CD14-positive monocyte (primary cell): ENCODE measurements at regions of chr2 and their contacts with region 1.

Region 1: DNA sequence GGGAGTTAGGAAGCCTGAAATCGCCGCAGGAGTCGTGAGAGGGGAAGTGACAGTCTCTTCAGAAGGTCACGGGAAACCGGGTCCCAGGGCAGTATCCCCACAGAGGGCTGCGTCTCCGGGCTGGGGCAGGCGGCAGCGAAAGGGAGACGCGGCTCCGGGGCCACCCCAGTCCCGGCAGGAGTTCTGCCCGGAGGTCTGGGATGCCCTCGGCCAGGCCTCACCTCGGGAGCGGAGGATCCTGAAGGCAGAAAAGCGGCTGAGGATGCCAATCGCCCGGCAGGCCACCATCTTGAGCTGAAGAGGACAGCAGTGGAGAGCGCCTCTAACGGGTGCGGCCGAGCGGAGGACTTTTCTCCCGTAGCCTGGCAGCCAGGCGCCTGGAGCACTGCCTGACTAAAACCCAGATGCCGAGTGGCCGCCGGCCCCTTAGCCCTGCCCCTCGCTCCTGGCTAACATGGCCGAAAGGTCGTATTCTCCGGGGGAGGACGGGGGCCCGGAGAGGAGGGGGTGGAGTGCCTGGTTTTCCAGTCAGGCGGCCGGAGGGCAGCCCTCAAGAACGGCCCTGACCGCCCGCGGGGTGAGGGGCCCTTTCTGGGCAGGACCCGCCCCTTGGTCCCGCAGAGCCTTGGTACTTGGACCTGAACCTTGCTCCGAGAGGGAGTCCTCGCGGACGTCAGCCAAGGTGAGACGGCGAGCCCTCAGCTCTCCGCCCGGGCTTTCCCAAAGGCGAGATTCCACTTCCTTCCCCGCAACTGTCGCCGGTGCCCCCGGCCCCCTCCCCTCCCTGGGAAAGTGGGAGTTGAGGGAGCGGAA is at the starts of genes HADHA and HADHB:
- DNase-seq: peak; percentile 80 to 84 (median 83)
- H3K4me3 ChIP-seq: peak within 1 kb of the TSS; percentile 76 to 97 (median 79)
- H3K4me3 Mint-ChIP-seq: peak within 1 kb of the TSS; percentile 98 to 99
- H3K27ac ChIP-seq: peak within 1 kb of the TSS; percentile 97 to 98
- H3K27ac Mint-ChIP-seq: peak within 1 kb of the TSS; percentile 98 to 100 (median 100)
- H3K4me1 ChIP-seq: peaks cover 47 to 63% of the 10 kb centered on the region in 2 donors
- H3K4me1 Mint-ChIP-seq: peaks cover 62% of the 10 kb centered on the region
- H3K27me3 ChIP-seq: no peaks in the 10 kb centered on the region
- H3K27me3 Mint-ChIP-seq: no peaks in the 10 kb centered on the region
- CTCF ChIP-seq: no peak
- polyA plus RNA-seq, gene HADHA: 60.2 to 187 (median 155) TPM
- polyA plus RNA-seq, gene HADHB: 94.3 to 200 (median 186) TPM

Region 2: GRCh38 chr2:25512707-25513106 is 731.8 kb before region 1 on chr2:
- intact Hi-C with region 1: no loop called
- DNase-seq: peak in 2 of 3 donors; percentile 3 to 8
- H3K4me3 ChIP-seq: no peak overlapping the region
- H3K4me3 Mint-ChIP-seq: no peak overlapping the region
- H3K27ac ChIP-seq: no peak overlapping the region
- H3K27ac Mint-ChIP-seq: peak overlapping the region in 1 of 7 donors; percentile 3
- H3K4me1 ChIP-seq: peaks cover 0 to 8% of the 10 kb centered on the region in 2 donors
- H3K4me1 Mint-ChIP-seq: peaks cover 20% of the 10 kb centered on the region
- H3K27me3 ChIP-seq: no peaks in the 10 kb centered on the region
- H3K27me3 Mint-ChIP-seq: peaks cover 0 to 3% (median 0%) of the 10 kb centered on the region in 3 donors
- CTCF ChIP-seq: no peak

Region 3: GRCh38 chr2:26088032-26088643 is 156.4 kb before region 1 on chr2:
- intact Hi-C with region 1: no loop called
- DNase-seq: peak in 2 of 3 donors; percentile 13 to 21
- H3K4me3 ChIP-seq: no peak overlapping the region
- H3K4me3 Mint-ChIP-seq: no peak overlapping the region
- H3K27ac ChIP-seq: no peak overlapping the region
- H3K27ac Mint-ChIP-seq: peak overlapping the region in 1 of 7 donors; percentile 69
- H3K4me1 ChIP-seq: peaks cover 28 to 35% of the 10 kb centered on the region in 2 donors
- H3K4me1 Mint-ChIP-seq: peaks cover 61% of the 10 kb centered on the region
- H3K27me3 ChIP-seq: no peaks in the 10 kb centered on the region
- H3K27me3 Mint-ChIP-seq: peaks cover 0 to 2% (median 0%) of the 10 kb centered on the region in 3 donors
- CTCF ChIP-seq: peak; percentile 86

Region 4: DNA sequence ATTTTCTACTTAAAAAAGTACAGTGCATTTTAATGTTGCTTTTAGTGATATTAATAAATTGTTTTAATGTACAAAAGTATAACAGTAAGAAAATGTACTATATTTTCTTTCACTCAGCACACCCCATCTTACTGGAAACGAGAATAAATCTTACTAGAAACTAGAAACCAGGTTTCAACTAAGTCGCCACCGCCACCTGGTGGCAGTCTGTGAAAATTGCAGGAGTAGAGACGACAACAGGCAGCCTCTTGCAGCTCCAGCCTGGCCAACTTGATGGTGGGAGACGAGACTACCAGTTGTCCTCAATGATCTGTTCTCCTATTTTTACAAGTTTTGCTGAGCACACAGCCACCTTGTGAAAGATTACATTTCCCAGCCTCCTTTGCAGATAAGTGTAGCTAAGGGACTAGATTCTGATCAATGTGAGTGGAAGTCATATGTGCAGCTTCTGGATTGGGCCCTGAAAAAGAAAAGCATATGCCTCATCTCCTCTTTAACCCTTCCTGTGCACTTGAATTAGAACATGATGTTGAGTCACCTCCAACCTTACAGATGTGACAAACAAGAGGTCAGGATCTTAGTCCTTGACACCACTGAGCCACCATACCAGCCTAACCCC is 224.7 kb after region 1 on chr2:
- intact Hi-C with region 1: loop called in 1 of 2 experiments (anchors 10 kb)
- DNase-seq: peak; percentile 60 to 81 (median 67)
- H3K4me3 ChIP-seq: no peak overlapping the region
- H3K4me3 Mint-ChIP-seq: no peak overlapping the region
- H3K27ac ChIP-seq: no peak overlapping the region
- H3K27ac Mint-ChIP-seq: peak overlapping the region in 1 of 7 donors; percentile 18
- H3K4me1 ChIP-seq: no peaks in the 10 kb centered on the region
- H3K4me1 Mint-ChIP-seq: no peaks in the 10 kb centered on the region
- H3K27me3 ChIP-seq: no peaks in the 10 kb centered on the region
- H3K27me3 Mint-ChIP-seq: peaks cover 0 to 4% (median 1%) of the 10 kb centered on the region in 3 donors
- CTCF ChIP-seq: peak; percentile 96